ENCODE measurements at regions of chr17 and their contacts with region 1.

Region 1: GRCh38 chr17:45135192-45135977 is at the start of gene ACBD4:
- DNase-seq: peak; percentile 93
- H3K4me3 ChIP-seq: peak within 1 kb of the TSS; percentile 68 to 80 (median 71)
- H3K27ac ChIP-seq: peak within 1 kb of the TSS; percentile 26
- H3K4me1 ChIP-seq: peaks cover 30% of the 10 kb centered on the region
- H3K27me3 ChIP-seq: no peaks in the 10 kb centered on the region
- CTCF ChIP-seq: peak; percentile 100
- total RNA-seq, gene ACBD4: 6.5 to 8.1 TPM

Region 2: GRCh38 chr17:43814714-43815113 is 1320.7 kb before region 1 on chr17:
- CTCF ChIA-PET with region 1: no interaction called
- dilution Hi-C with region 1: no loop called
- in situ Hi-C with region 1: no loop called
- intact Hi-C with region 1: no loop called
- DNase-seq: peak; percentile 67
- H3K4me3 ChIP-seq: no peak overlapping the region
- H3K27ac ChIP-seq: no peak overlapping the region
- H3K4me1 ChIP-seq: peaks cover 12% of the 10 kb centered on the region
- H3K27me3 ChIP-seq: no peaks in the 10 kb centered on the region
- CTCF ChIP-seq: no peak

Region 3: GRCh38 chr17:44775136-44775837 is 360.1 kb before region 1 on chr17:
- CTCF ChIA-PET with region 1: interaction called, 5 read pairs
- dilution Hi-C with region 1: no loop called
- in situ Hi-C with region 1: no loop called
- intact Hi-C with region 1: loop called (anchors 1 kb)
- DNase-seq: peak; percentile 98
- H3K4me3 ChIP-seq: peak overlapping the region; percentile 41 to 84 (median 60)
- H3K27ac ChIP-seq: no peak overlapping the region
- H3K4me1 ChIP-seq: peaks cover 24% of the 10 kb centered on the region
- H3K27me3 ChIP-seq: no peaks in the 10 kb centered on the region
- CTCF ChIP-seq: no peak

Region 4: GRCh38 chr17:45006927-45007461 is 128.4 kb before region 1 on chr17:
- CTCF ChIA-PET with region 1: no interaction called
- dilution Hi-C with region 1: no loop called
- in situ Hi-C with region 1: no loop called
- intact Hi-C with region 1: no loop called
- DNase-seq: no peak
- H3K4me3 ChIP-seq: no peak overlapping the region
- H3K27ac ChIP-seq: no peak overlapping the region
- H3K4me1 ChIP-seq: no peaks in the 10 kb centered on the region
- H3K27me3 ChIP-seq: no peaks in the 10 kb centered on the region
- CTCF ChIP-seq: peak in 1 of 2 donors; percentile 28

Region 5: DNA sequence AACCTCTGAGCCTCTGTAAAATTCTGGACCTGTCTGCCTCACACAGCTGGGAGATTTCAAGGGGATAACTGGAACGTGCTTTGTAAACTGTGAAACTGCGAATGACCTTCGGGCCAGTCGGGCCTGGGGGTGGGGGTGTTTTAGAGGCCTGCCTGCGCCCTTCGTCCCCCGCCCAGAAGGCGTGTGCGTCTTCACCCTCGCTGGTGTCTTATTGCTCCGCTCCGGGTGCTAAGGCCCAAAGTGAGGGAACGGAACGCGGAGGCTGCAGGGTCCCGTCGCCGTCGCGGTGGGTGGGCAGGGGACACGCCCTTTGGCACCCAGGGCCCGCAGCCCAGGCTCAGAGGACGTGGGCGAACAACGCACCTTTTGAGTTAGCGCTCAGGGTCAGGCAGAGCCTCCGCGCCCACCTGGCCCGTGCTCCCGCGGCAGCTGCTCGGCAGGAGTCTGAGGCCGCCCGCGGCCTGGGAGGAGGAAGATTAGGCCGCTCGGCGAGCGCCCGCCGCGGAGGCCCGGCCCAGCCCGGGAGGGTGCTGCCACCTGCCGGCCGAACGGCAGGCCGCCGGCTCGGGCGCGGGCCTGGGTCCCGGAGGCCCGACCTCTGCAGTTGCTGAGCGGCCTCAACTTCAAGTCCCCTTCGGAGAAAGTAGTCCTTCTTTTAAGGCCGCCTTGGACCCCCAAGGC is 113.6 kb before region 1 on chr17:
- CTCF ChIA-PET with region 1: no interaction called
- dilution Hi-C with region 1: no loop called
- in situ Hi-C with region 1: no loop called
- intact Hi-C with region 1: loop called (anchors 2 kb)
- DNase-seq: peak; percentile 39
- H3K4me3 ChIP-seq: peak overlapping the region in 1 of 3 experiments; percentile 24
- H3K27ac ChIP-seq: no peak overlapping the region
- H3K4me1 ChIP-seq: peaks cover 14% of the 10 kb centered on the region
- H3K27me3 ChIP-seq: no peaks in the 10 kb centered on the region
- CTCF ChIP-seq: peak; percentile 57 to 71

Region 6: DNA sequence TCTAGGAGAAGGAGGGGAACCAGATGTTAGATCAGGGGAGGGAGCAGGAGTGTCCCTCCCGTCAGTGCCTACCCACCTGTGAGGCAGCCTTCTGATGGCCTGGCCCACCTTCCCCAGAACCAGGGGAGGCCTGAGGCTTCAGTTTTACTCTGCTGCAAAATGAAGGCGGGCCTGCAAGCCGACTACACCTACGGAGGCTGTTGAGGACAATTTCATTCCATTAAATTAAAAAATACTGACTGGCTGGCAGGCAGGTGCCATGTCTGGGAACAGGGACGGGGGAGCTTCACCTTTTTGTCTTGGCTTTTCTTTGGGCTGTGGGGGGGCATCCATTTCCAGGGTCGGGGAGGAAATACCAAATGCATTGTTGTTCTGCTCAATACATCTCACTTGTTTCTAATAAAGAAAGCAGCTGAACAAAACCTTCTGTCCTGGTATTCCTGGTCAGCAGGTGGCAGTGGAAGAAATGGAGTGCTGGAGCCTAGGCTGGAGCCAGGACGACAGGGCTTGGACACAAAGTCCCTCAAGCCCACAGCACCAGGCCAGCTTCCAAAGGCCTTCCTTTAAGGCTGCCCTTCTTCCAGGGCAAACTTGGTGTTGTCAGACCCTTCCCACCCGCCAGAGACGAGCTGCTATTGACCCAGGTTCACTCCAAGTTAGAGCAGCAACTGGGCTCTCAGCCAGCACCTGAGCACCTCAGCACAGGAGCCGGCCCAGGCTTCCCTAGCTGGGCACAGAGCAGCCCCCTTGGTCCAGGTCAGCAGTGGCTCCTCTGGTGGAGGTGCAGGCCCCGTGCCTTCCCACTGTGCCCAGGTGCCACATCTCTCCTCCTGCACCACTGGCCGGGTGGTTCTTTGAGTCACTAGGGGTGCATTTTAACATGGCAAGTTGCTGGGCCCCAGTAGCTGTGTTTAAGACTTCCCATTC is 26.5 kb before region 1 on chr17:
- CTCF ChIA-PET with region 1: no interaction called
- dilution Hi-C with region 1: no loop called
- in situ Hi-C with region 1: no loop called
- intact Hi-C with region 1: loop called (anchors 2 kb)
- DNase-seq: no peak
- H3K4me3 ChIP-seq: no peak overlapping the region
- H3K27ac ChIP-seq: no peak overlapping the region
- H3K4me1 ChIP-seq: peaks cover 2% of the 10 kb centered on the region
- H3K27me3 ChIP-seq: no peaks in the 10 kb centered on the region
- CTCF ChIP-seq: peak in 1 of 2 donors; percentile 28

Region 7: DNA sequence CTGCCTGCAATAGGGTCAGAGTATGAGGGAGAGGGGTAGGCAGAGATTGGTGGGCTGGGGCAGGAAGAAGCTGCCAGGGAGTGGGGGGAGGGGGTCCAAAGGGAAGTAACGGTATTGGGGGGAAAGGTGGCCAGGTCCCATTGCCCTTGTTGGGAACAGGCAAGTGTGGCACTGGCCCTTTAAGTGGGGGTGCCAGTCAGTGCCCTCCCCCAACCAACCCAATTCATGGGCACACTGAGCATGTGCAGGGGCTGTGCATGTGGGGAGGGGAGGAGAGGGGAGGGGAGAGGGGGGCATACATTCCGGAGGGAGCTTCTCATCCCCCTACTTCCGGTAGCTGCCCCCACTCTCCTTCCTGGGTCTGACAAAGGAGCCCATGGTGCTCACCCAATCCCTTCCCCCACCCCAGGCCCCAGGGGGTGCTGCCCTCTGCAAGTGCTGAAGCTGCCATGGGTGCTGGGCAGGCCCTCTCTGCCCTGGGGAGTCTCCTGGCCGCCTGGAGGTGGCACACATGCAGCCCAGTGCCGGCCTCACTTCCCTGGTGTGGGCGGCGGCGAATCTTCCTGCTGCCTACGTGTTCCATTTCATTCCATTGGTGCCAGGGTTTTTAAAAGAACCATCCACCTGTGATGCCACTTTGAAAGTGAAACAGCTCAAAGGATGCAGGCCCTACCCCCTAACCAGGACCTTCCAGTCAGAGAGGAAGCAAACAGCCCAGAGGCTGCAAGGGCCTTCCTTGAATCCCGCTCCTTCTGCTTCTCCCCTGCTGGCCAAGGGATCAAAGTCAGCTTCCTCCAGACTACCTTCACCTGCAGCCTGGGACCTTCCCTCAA is 37.3 kb after region 1 on chr17:
- CTCF ChIA-PET with region 1: interaction called, 15 read pairs
- dilution Hi-C with region 1: no loop called
- in situ Hi-C with region 1: no loop called
- intact Hi-C with region 1: loop called (anchors 1 kb)
- DNase-seq: peak; percentile 96
- H3K4me3 ChIP-seq: peak overlapping the region; percentile 40 to 58 (median 49)
- H3K27ac ChIP-seq: peak overlapping the region; percentile 99
- H3K4me1 ChIP-seq: peaks cover 55% of the 10 kb centered on the region
- H3K27me3 ChIP-seq: no peaks in the 10 kb centered on the region
- CTCF ChIP-seq: peak; percentile 13 to 46

Region 8: DNA sequence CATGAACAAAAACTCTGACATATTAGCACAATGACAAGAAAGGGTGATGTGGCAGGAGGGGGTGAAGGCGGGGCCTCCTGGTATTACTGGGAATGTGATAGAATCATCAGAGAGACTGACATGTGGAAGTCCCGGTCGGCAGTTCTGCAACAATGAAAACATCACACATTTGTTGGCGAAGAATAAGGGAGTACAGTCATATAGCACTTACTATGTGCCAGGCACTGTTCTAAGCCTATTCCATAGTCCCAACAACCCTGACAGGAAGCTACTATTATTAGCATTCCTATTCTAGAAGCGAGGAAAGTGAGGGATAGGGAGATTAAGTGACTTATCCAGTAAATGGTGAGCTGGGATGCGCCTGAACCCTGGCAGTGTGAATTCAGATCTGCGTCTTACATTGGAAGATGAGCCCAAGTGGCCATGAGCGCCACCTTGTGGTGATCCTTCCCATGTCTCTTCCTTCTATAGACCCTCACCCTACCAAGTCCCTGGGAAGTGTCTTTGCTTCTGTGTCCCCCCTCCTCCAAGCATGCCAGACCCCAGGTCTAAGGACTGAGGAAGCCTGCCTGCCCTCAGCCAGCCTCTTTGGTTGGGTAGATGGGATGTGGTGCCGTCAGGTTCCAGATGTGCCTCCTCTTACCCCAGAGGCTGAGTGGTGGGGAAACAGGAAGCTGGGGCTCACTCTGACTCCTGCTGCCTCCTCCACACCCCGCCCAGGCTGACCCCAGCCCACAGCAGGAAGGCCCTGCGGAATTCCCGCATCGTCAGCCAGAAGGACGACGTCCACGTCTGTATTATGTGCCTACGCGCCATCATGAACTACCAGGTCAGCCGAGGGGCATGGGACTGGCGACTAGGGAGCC is 100.3 kb after region 1 on chr17:
- CTCF ChIA-PET with region 1: interaction called, 7 read pairs
- dilution Hi-C with region 1: no loop called
- in situ Hi-C with region 1: no loop called
- intact Hi-C with region 1: loop called (anchors 1 kb)
- DNase-seq: peak; percentile 41
- H3K4me3 ChIP-seq: no peak overlapping the region
- H3K27ac ChIP-seq: no peak overlapping the region
- H3K4me1 ChIP-seq: peaks cover 10% of the 10 kb centered on the region
- H3K27me3 ChIP-seq: no peaks in the 10 kb centered on the region
- CTCF ChIP-seq: peak; percentile 85 to 86

Measured in mammary epithelial cell (primary cell).